Pancreas (tissue), 10 donors: ENCODE measurements at regions of chr7 and their contacts with region 1.

Region 1: GRCh38 chr7:23055582-23056178 is 41.8 kb upstream of the HYCC1 start:
- DNase-seq: peak in 3 of 6 donors; percentile 24 to 58 (median 31)
- ATAC-seq: peak in 3 of 4 donors; percentile 94 to 95 (median 94)
- H3K4me3 ChIP-seq: no peak overlapping the region
- H3K27ac ChIP-seq: no peak overlapping the region
- H3K4me1 ChIP-seq: no peaks in the 10 kb centered on the region
- H3K27me3 ChIP-seq: no peaks in the 10 kb centered on the region
- CTCF ChIP-seq: peak; percentile 43 to 78 (median 70)

Region 2: GRCh38 chr7:22726345-22727185 is 329.1 kb before region 1 on chr7:
- intact Hi-C with region 1: loop called in 1 of 3 experiments (anchors 10 kb)
- DNase-seq: peak in 5 of 6 donors; percentile 24 to 53 (median 36)
- ATAC-seq: peak; percentile 77 to 87 (median 79)
- H3K4me3 ChIP-seq: peak overlapping the region in 2 of 4 donors; percentile 1 to 26
- H3K27ac ChIP-seq: peak overlapping the region in 1 of 4 donors; percentile 37
- H3K4me1 ChIP-seq: no peaks in the 10 kb centered on the region
- H3K27me3 ChIP-seq: no peaks in the 10 kb centered on the region
- CTCF ChIP-seq: peak in 3 of 4 donors; percentile 13 to 39 (median 15)